ENCODE measurements at regions of chr4 and their contacts with region 1.

Region 1: DNA sequence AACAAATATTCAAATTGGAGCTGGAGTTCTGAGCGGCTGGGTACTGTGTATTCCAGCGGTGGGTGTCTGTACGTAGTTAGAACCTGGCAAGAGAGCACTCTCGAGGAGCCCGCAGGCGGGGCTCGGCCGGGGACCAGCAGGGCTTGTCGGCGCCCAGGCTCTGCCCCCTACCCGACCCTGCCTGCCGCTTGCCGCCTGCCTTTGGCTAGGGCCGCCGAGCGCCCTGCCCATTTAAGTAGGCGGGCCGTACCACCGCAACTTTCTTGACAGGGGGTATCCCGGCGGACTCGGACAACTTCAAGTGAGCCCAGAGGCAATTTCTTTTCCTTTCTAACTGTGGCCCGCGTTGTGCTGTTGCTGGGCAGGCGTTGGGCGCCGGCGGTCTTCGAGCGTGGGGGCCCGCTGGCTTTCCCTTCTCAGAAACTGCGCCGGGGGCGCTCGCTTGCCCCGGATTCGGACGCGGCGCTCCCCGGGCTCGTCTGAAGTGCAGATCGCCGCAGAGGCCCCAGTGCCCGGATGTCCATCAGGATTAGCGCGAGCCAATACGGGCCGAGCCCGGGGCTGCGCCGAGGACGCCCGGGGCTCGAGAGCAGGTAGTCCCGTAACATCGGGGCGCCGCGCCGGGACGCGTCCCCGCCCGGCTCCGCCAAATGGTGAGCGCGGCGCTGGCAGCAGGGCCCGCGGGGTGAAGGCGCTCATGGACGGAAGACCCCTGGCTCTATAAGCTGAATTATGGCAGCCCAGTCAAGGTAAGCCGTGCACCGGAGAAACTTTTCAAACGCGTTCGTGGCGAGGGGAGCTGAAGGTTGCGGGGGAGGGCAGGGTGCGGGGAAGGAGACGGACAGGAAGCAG is 72.1 kb downstream of the AFF1 start:
- DNase-seq: peak; percentile 96
- H3K4me3 ChIP-seq: peak overlapping the region; percentile 72 to 78 (median 75)
- H3K27ac ChIP-seq: peak overlapping the region; percentile 91 to 96 (median 94)
- H3K4me1 ChIP-seq: peaks cover 0 to 52% (median 45%) of the 10 kb centered on the region in 4 donors
- H3K27me3 ChIP-seq: no peaks in the 10 kb centered on the region
- CTCF ChIP-seq: peak in 3 of 4 experiments; percentile 3 to 36 (median 22)
- EP300 ChIP-seq: peak in 2 of 4 donors; percentile 7 to 10
- POLR2A ChIP-seq: peak; percentile 95 to 96

Region 2: DNA sequence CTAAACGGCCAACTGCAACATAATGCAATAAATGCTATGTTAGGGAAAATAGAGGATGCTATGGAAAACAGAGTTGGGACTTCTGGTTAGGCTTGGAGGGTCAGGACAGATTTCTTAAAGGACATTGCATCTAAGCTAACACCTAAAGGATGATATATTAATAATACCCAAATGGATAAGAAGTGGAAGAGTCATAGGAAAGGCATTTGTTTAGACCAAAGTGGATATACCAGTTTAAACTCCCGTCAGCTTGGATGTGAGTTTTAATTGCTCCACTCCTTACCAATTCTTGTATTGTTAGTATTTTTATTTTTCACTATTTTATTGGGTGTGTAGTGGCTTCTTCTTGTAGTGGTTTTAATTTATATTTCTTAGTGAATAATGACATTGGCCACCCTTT is 318.9 kb before region 1 on chr4:
- intact Hi-C with region 1: no loop called
- DNase-seq: no peak
- H3K4me3 ChIP-seq: no peak overlapping the region
- H3K27ac ChIP-seq: no peak overlapping the region
- H3K4me1 ChIP-seq: no peaks in the 10 kb centered on the region
- H3K27me3 ChIP-seq: no peaks in the 10 kb centered on the region
- CTCF ChIP-seq: no peak
- EP300 ChIP-seq: no peak
- POLR2A ChIP-seq: no peak

Region 3: DNA sequence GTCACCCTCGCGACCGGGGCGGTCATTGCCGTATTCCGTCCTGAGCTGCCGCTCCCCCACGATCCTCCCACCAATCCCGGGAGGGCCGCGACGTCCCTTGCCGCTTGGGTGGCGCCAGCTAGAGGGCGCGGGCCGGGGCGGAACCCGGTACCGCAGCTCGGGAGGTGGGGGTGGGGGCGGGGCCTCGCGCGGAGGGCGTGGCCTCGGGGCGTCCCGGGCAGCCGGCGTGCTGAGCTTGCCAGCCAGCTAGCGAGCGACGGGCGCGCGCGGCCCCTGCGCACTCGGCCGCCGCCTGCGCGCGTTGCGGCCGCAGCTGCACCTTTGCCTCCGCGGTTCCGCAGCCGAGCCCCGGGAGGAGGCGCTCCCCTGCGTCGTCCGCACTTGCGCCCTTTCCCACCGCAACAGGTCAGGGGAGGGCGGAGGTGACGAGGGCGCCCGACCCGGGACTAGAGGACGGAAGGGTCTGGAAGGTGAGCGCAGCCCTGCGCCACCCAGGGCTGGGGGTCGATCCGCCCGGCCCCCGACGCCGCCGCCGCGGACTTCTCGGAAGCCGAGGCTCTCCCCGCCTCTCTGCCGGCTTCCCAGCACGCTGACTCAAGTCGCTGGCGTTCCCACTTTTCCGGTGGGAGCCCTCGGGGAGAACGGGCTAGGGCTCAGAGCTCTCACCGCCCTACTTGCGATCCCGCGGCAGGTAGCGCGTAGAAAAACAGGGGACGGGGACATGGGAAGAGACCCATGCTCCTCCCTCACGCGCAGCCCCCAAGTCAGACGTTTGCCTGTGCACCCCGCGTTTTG is 71.9 kb before region 1 on chr4 and contains the start of gene AFF1:
- intact Hi-C with region 1: loop called (anchors 1 kb)
- DNase-seq: peak; percentile 97
- H3K4me3 ChIP-seq: peak within 1 kb of the TSS; percentile 81 to 97 (median 93)
- H3K27ac ChIP-seq: peak within 1 kb of the TSS; percentile 95 to 99 (median 99)
- H3K4me1 ChIP-seq: peaks cover 0 to 42% (median 29%) of the 10 kb centered on the region in 4 donors
- H3K27me3 ChIP-seq: no peaks in the 10 kb centered on the region
- CTCF ChIP-seq: peak in 1 of 4 experiments; percentile 46
- EP300 ChIP-seq: peak in 1 of 4 donors; percentile 41
- POLR2A ChIP-seq: peak; percentile 20 to 47
- total RNA-seq, gene AFF1: 61.7 to 100 (median 85.4) TPM

Region 4: DNA sequence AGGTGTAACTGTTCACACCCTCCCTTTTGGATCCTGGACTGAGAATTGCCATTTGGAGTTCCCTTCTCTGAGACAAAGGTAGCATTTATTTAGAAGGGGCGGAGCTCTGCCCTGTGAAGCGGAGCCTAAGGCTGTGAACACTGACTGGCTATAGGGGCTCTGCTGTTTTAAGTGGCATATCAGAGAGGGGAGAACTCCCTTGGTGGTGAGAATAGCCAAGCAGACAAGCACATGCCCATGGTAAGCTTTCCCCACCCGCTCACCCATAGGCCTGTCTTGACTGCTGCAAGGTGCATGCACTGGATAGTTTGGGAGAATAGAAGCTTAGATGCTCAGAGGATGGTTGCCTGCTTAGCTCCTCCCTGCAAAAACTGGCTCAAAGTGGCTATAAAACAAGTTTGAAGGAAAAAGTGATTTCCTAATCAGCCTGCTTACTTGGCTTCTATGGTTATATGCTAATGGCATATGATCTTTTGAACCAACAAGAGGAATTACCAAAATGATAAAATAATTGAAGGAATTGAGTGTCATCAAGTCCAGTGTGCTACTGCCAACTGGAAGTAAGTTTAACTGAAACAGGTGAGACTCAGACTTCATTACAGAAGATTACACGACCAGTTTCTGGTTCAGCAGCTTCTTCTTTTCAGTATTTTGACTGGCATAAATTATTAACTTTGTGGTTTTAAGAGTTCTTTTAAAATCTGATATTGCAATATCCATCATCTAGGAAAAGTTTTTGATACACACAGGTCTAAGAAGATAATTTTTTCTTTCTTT is 36.3 kb after region 1 on chr4:
- intact Hi-C with region 1: loop called (anchors 5 kb)
- DNase-seq: no peak
- H3K4me3 ChIP-seq: no peak overlapping the region
- H3K27ac ChIP-seq: peak overlapping the region; percentile 80 to 87 (median 84)
- H3K4me1 ChIP-seq: peaks cover 0 to 98% (median 86%) of the 10 kb centered on the region in 4 donors
- H3K27me3 ChIP-seq: no peaks in the 10 kb centered on the region
- CTCF ChIP-seq: no peak
- EP300 ChIP-seq: no peak
- POLR2A ChIP-seq: no peak

Region 5: GRCh38 chr4:87058356-87059073 is 51.6 kb after region 1 on chr4:
- intact Hi-C with region 1: loop called (anchors 5 kb)
- DNase-seq: no peak
- H3K4me3 ChIP-seq: no peak overlapping the region
- H3K27ac ChIP-seq: peak overlapping the region; percentile 68 to 84 (median 76)
- H3K4me1 ChIP-seq: peaks cover 0 to 94% (median 85%) of the 10 kb centered on the region in 4 donors
- H3K27me3 ChIP-seq: no peaks in the 10 kb centered on the region
- CTCF ChIP-seq: peak; percentile 11 to 36 (median 24)
- EP300 ChIP-seq: no peak
- POLR2A ChIP-seq: no peak

Region 6: GRCh38 chr4:87081826-87082225 is 74.9 kb after region 1 on chr4:
- intact Hi-C with region 1: loop called (anchors 2 kb)
- DNase-seq: no peak
- H3K4me3 ChIP-seq: no peak overlapping the region
- H3K27ac ChIP-seq: peak overlapping the region; percentile 77 to 87 (median 85)
- H3K4me1 ChIP-seq: peaks cover 0 to 87% (median 72%) of the 10 kb centered on the region in 4 donors
- H3K27me3 ChIP-seq: no peaks in the 10 kb centered on the region
- CTCF ChIP-seq: no peak
- EP300 ChIP-seq: no peak
- POLR2A ChIP-seq: no peak

Region 7: DNA sequence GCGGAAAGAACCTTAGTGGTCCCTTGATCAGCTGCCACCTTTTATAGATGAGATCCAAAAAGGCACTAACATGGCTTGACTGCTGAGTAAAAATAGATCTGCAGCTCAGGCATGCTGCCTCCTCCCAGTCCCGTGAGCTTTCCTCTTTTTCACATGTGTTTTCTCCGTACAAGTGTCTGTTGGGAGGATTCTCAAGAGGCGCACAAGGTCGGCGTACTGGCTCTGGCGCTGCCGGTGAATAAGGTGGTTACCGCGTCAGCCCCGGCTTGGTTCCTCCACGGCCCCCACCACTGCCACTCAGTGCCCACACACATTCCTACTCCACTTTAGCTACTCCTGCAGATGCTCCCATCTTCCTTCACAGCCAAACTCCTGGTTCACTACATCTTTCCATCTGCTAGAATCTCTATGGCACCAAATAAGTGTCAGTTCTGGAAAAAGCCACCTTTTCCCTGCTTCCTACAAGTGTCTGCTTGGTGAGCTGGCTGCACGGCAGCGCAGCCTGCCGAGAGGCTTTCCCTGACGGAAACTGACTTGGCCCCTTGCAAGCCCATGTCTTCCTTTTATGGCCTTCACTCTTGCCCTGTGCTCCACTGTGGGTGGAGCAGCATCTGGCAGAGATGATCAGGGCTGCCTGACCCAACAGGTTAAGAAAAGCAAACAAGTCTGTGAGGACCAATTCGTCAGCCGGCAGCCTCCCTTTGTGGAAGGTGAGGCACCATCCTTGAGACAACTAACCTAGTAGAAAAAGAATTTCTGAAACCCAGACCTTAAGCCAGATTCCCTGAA is 113.7 kb after region 1 on chr4:
- intact Hi-C with region 1: loop called (anchors 5 kb)
- DNase-seq: peak; percentile 88
- H3K4me3 ChIP-seq: peak overlapping the region; percentile 20 to 44 (median 38)
- H3K27ac ChIP-seq: peak overlapping the region; percentile 86 to 88 (median 86)
- H3K4me1 ChIP-seq: peaks cover 0 to 76% (median 61%) of the 10 kb centered on the region in 4 donors
- H3K27me3 ChIP-seq: no peaks in the 10 kb centered on the region
- CTCF ChIP-seq: no peak
- EP300 ChIP-seq: no peak
- POLR2A ChIP-seq: peak; percentile 19 to 61

Region 8: GRCh38 chr4:87235020-87235671 is 228.2 kb after region 1 on chr4:
- intact Hi-C with region 1: loop called (anchors 1 kb)
- DNase-seq: no peak
- H3K4me3 ChIP-seq: peak overlapping the region; percentile 25 to 49 (median 45)
- H3K27ac ChIP-seq: peak overlapping the region in 2 of 4 donors; percentile 35 to 54
- H3K4me1 ChIP-seq: peaks cover 0 to 14% (median 2%) of the 10 kb centered on the region in 4 donors
- H3K27me3 ChIP-seq: no peaks in the 10 kb centered on the region
- CTCF ChIP-seq: no peak
- EP300 ChIP-seq: no peak
- POLR2A ChIP-seq: no peak